AG04450 (cell line): ENCODE measurements at regions of chr2 and their contacts with region 1.

Region 1: DNA sequence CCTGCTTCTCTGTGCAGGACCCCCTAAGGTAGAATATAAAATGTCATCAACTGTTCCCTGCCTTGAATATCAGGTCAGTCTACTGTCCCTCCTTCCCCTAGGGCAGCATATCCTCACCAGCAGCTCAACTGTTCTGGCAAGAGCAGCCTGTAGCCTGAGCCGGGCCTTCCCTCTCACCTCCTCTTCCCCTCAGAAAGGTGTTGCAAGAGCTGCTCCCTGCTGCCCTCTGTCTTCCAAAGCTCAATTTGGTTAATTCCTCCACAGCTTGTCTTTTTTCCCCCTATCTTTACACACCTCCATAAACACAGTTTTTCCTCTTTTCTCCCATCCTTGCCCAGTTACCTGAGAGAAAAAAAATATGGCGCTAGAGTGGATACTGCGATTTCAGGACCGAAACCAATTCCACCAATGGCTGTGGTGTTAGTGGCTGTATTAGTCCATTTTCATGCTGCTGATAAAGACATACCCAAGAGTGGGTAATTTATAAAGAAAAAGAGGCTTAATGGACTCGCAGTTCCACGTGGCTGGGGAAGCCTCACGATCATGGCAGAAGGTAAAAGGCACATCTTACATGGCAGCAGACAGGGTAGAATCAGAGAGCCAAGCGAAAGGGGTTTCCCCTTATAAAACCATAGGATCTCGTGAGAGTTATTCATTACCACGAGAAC is 184.7 kb downstream of the MREG start:
- DNase-seq: no peak
- H3K4me3 ChIP-seq: no peak overlapping the region
- H3K27ac ChIP-seq: no peak overlapping the region
- H3K27me3 ChIP-seq: no peaks in the 10 kb centered on the region
- CTCF ChIP-seq: peak; percentile 59

Region 2: GRCh38 chr2:215841175-215841816 is 12.6 kb after region 1 on chr2:
- CTCF ChIA-PET with region 1: interaction called, 10 read pairs
- POLR2A ChIA-PET with region 1: no interaction called
- DNase-seq: no peak
- H3K4me3 ChIP-seq: no peak overlapping the region
- H3K27ac ChIP-seq: no peak overlapping the region
- H3K27me3 ChIP-seq: no peaks in the 10 kb centered on the region
- CTCF ChIP-seq: no peak